ENCODE measurements at regions of chr6 and their contacts with region 1.

Region 1: GRCh38 chr6:133952815-133953633 is at the start of gene TBPL1:
- DNase-seq: peak; percentile 93
- H3K4me3 Mint-ChIP-seq: peak within 1 kb of the TSS; percentile 93
- H3K27ac Mint-ChIP-seq: peak within 1 kb of the TSS; percentile 89
- H3K4me1 Mint-ChIP-seq: peaks cover 37% of the 10 kb centered on the region
- H3K27me3 Mint-ChIP-seq: no peaks in the 10 kb centered on the region
- total RNA-seq, gene TBPL1: 31.3 to 35.7 TPM

Region 2: GRCh38 chr6:133707456-133707855 is 245.6 kb before region 1 on chr6:
- CTCF ChIA-PET with region 1: no interaction called
- POLR2A ChIA-PET with region 1: no interaction called
- intact Hi-C with region 1: no loop called
- DNase-seq: peak; percentile 11
- H3K4me3 Mint-ChIP-seq: no peak overlapping the region
- H3K27ac Mint-ChIP-seq: no peak overlapping the region
- H3K4me1 Mint-ChIP-seq: no peaks in the 10 kb centered on the region
- H3K27me3 Mint-ChIP-seq: no peaks in the 10 kb centered on the region

Region 3: DNA sequence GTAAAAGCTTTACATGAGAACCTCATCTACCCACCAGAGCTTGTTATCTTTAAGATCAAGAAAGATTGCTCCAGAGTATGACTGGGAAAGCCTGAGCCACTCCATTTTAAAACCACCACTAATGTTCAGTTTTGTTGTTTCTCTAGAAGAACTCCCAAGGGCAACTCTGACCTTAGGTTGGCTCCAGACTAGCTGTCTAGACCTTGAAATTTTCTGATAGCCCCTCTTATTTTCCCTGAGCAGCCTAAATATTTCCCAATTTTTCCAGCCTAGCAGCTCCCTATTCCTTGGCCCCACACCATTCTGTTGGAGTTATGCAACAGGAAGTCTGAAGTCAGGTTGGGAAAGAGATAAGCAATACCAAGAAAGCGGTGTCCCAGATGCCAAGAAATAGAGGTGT is 148.8 kb before region 1 on chr6:
- CTCF ChIA-PET with region 1: no interaction called
- POLR2A ChIA-PET with region 1: no interaction called
- intact Hi-C with region 1: no loop called
- DNase-seq: no peak
- H3K4me3 Mint-ChIP-seq: no peak overlapping the region
- H3K27ac Mint-ChIP-seq: no peak overlapping the region
- H3K4me1 Mint-ChIP-seq: no peaks in the 10 kb centered on the region
- H3K27me3 Mint-ChIP-seq: peaks cover 22% of the 10 kb centered on the region

Region 4: DNA sequence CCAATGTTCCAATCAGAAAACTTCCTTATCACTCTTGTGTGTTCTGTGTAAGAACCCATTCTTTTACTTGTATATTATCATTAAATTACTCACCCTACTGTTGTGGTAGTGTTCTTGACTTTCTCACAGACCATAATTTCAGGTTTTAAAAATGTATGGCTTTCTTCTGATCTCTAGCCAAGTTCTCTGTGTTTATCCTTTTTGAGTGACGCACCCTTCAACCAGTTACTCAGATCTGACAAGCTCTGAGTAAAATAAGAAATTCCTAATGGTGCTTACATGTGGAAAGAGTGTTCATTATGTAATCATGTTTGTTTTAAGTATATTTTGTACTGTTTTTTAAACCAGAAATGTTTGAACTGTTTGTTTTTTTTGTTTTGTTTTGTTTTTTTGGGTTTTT is 11.0 kb after region 1 on chr6:
- CTCF ChIA-PET with region 1: interaction called, 16 read pairs
- POLR2A ChIA-PET with region 1: interaction called, 10 read pairs
- intact Hi-C with region 1: loop called (anchors 1 kb)
- DNase-seq: no peak
- H3K4me3 Mint-ChIP-seq: no peak overlapping the region
- H3K27ac Mint-ChIP-seq: peak overlapping the region; percentile 5
- H3K4me1 Mint-ChIP-seq: peaks cover 62% of the 10 kb centered on the region
- H3K27me3 Mint-ChIP-seq: no peaks in the 10 kb centered on the region

Region 5: DNA sequence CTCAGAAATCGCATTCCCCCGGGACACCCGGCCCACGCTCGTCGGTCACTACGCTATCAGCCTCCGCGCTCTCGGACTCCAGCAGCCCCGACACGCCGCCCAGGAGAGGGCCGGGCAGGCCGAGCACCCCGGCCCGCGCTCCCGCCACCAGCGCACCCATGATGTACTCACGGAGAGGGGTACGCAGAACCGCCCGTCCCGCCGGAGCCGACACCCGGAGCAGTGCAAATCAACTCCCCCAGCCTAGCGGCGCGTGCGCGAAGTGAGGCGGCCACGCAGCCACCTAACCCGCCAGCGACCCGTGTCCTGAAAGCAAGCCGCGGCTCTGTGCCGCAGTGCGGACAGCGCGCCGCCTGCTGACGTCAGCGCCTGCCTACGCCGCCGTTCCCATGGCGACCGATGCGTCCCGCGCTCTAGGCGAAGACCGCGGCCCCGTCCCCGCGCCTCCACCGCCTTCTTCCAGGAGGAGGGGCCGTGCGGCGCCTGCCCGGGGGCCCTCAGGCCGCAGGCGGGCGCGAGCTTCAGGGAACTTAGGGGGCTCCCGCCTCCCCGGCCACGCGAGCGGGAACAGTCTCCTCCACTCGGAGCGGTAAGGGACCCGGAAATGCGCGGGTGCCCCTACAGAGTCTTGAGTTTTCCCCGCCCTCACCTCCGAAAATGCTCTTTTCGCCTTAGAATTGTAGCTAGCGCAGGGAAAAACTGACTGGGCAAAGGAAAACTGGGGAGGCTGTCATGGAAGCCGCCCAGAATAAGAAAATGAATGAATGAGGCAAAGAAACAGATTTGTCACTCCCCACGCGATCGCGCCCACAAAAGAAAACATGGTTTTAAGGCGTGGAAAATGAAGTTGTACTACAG is 1544.6 kb after region 1 on chr6 and contains the start of gene AHI1:
- CTCF ChIA-PET with region 1: no interaction called
- POLR2A ChIA-PET with region 1: no interaction called
- intact Hi-C with region 1: loop called (anchors 10 kb)
- DNase-seq: peak; percentile 90
- H3K4me3 Mint-ChIP-seq: peak within 1 kb of the TSS; percentile 9
- H3K27ac Mint-ChIP-seq: no peak within 1 kb of the TSS
- H3K4me1 Mint-ChIP-seq: peaks cover 10% of the 10 kb centered on the region
- H3K27me3 Mint-ChIP-seq: no peaks in the 10 kb centered on the region
- total RNA-seq, gene AHI1: 18.6 to 22.7 TPM

Measured in activated CD4-positive, alpha-beta memory T cell treated with anti-CD3 and anti-CD28 coated beads for 36 hours (primary cell).